ENCODE measurements at regions of chr6 and their contacts with region 1.

Region 1: GRCh38 chr6:106639812-106640211 is 10.4 kb downstream of the QRSL1 start:
- DNase-seq: no peak
- H3K4me3 ChIP-seq: no peak overlapping the region
- H3K27ac ChIP-seq: no peak overlapping the region
- H3K4me1 ChIP-seq: peaks cover 22% of the 10 kb centered on the region
- H3K27me3 ChIP-seq: no peaks in the 10 kb centered on the region
- CTCF ChIP-seq: no peak

Region 2: DNA sequence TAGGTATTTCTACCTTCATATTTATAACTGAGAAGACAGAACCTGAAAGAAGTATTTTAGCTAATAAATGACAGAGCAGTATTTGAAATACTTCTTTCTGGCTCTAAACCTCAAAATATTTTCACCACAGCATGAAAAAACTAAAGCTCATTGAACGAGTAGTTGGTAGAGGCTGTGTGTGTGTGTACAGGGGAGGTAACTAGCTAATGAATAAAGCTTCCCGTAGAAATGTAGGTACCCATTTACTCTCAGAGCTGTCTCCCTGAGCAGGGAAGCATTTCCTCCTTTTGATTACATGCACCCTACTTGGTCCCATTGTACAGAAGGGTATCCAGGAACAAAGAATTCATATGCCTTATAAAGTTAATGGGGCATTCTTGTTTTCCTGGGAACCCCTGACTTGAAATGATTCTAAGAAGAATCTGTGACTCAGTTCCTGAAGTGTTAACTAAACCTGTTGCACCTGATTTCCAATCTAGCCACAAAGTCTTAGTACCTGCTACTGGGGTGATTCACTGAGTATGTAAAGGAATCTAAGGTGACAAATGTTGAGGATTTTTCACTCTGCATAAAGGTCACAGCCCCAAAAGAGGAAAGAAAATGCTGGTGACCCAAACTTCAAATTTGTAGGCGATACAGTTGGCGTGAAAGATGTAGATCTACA is 266.8 kb before region 1 on chr6:
- CTCF ChIA-PET with region 1: no interaction called
- POLR2A ChIA-PET with region 1: no interaction called
- intact Hi-C with region 1: no loop called
- DNase-seq: no peak
- H3K4me3 ChIP-seq: no peak overlapping the region
- H3K27ac ChIP-seq: no peak overlapping the region
- H3K4me1 ChIP-seq: no peaks in the 10 kb centered on the region
- H3K27me3 ChIP-seq: no peaks in the 10 kb centered on the region
- CTCF ChIP-seq: no peak

Region 3: GRCh38 chr6:106568530-106568929 is 71.3 kb before region 1 on chr6:
- CTCF ChIA-PET with region 1: no interaction called
- POLR2A ChIA-PET with region 1: no interaction called
- intact Hi-C with region 1: loop called (anchors 2 kb)
- DNase-seq: no peak
- H3K4me3 ChIP-seq: no peak overlapping the region
- H3K27ac ChIP-seq: no peak overlapping the region
- H3K4me1 ChIP-seq: no peaks in the 10 kb centered on the region
- H3K27me3 ChIP-seq: no peaks in the 10 kb centered on the region
- CTCF ChIP-seq: no peak